H1 (cell line): ENCODE measurements at regions of chr17 and their contacts with region 1.

Region 1: GRCh38 chr17:50783193-50783660 is 15.9 kb upstream of the ANKRD40CL start:
- DNase-seq: peak; percentile 89 to 98
- H3K4me3 ChIP-seq: no peak overlapping the region
- H3K27ac ChIP-seq: no peak overlapping the region
- H3K4me1 ChIP-seq: peaks cover 0 to 3% (median 0%) of the 10 kb centered on the region in 4 experiments; a peak in 1 of 7 replicates
- H3K27me3 ChIP-seq: no peaks in the 10 kb centered on the region
- CTCF ChIP-seq: peak; percentile 99 to 100 (median 99)
- EP300 ChIP-seq: peak in 1 of 2 experiments; percentile 40; a peak in 1 of 3 replicates
- POLR2A ChIP-seq: no peak
- RAD21 ChIP-seq: peak; percentile 99 to 100

Region 2: DNA sequence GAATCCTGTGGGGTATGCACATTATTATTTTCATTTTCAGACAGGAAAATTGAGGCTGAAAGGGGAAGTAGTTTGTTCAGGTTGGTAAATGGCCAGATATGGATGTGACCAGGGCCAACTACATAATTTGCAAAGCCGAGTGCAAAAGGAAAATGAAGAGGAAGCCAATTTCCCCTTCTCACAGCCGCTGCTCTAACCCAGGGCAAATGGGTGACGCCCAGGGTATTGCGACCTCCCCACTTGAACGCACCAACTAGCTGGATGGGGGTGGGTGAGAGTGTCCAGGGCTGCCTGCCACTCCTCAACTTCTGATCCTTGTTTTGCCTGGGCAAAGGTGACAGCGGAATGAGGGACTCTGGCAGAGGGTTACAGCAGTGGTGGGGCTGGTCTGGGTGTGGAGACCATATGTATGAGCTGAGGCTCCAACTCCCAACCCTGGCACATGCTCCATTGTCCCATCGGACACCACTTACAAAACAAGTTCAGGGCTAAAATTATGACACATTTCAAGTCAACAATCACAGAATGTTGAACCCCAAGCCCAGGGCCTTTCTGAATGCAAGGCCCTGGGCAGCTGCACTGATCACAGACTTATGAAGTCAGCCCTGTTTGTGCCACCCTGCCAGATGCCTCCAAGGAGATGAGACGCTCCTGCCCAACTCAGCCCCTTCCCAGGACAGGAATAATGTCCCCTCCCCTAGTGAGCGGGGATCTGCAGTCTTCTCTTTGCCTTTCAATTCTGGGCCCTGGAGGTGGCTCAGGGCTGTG is 17.6 kb before region 1 on chr17:
- CTCF ChIA-PET with region 1: interaction called, 17 read pairs
- POLR2A ChIA-PET with region 1: no interaction called
- DNase-seq: no peak
- H3K4me3 ChIP-seq: no peak overlapping the region
- H3K27ac ChIP-seq: no peak overlapping the region
- H3K4me1 ChIP-seq: no peaks in the 10 kb centered on the region
- H3K27me3 ChIP-seq: no peaks in the 10 kb centered on the region
- CTCF ChIP-seq: no peak
- EP300 ChIP-seq: no peak
- POLR2A ChIP-seq: no peak
- RAD21 ChIP-seq: no peak

Region 3: GRCh38 chr17:50798424-50799288 is 15.4 kb after region 1 on chr17:
- CTCF ChIA-PET with region 1: interaction called, 130 read pairs
- POLR2A ChIA-PET with region 1: interaction called, 3 read pairs
- DNase-seq: no peak
- H3K4me3 ChIP-seq: no peak overlapping the region
- H3K27ac ChIP-seq: no peak overlapping the region
- H3K4me1 ChIP-seq: peaks cover 0 to 5% (median 2%) of the 10 kb centered on the region in 4 experiments; a peak in 4 of 7 replicates
- H3K27me3 ChIP-seq: no peaks in the 10 kb centered on the region
- CTCF ChIP-seq: no peak
- EP300 ChIP-seq: no peak
- POLR2A ChIP-seq: no peak
- RAD21 ChIP-seq: no peak

Region 4: DNA sequence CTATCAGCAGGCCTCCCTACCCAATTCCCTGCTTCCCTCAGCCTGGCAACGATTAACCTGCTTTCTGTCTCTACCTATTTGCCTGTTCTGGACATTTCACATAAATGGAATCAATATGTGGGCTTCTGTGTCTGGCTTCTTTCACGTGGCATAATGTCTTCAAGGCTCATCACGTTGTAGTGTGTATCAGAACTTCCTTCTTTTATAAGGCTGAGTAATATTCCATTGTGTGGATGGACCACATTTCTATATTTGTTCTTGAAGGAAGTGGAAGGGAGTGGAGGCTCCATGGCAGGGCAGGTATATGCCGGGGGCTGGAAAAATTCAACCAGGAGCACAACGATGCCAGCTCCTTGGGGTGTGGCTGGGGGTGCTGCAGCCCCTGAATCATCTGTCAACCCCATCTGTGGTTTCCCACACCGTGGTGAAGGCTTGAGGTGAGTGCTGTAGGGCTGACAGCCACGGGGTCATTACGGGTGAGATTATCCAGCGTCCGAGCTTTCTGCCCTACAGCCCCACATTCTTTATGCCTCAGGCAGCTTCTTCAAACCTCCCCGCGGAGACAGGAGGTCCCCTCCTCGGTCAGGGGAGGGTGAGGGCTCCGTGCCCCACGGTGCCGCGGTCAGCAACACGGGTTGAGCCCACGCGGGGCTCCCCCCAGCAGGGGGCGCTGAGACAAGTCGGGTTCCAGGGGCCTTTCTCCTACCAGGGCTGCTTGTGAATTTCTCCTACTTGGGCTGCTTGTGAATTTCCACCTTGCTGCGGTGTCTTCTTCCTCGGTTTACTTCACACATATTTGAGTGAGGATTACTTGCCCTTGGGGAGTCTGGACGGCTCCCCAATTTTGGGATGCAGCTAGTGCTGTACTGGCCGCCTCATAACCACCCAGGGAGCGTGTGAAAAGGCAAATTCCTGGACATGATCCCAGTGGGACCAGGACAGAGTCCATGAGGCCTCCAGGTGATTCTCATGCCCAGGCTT is 33.8 kb after region 1 on chr17:
- CTCF ChIA-PET with region 1: interaction called, 63 read pairs
- POLR2A ChIA-PET with region 1: no interaction called
- DNase-seq: peak in 1 of 2 experiments; percentile 82
- H3K4me3 ChIP-seq: no peak overlapping the region
- H3K27ac ChIP-seq: no peak overlapping the region
- H3K4me1 ChIP-seq: peaks cover 0 to 5% (median 0%) of the 10 kb centered on the region in 4 experiments; a peak in 2 of 7 replicates
- H3K27me3 ChIP-seq: no peaks in the 10 kb centered on the region; a peak in 1 of 7 replicates
- CTCF ChIP-seq: peak; percentile 67 to 76 (median 68)
- EP300 ChIP-seq: no peak
- POLR2A ChIP-seq: no peak
- RAD21 ChIP-seq: peak; percentile 43 to 62

Region 5: GRCh38 chr17:50834429-50835300 is 51.4 kb after region 1 on chr17:
- CTCF ChIA-PET with region 1: interaction called, 223 read pairs
- POLR2A ChIA-PET with region 1: interaction called, 4 read pairs
- DNase-seq: no peak
- H3K4me3 ChIP-seq: no peak overlapping the region
- H3K27ac ChIP-seq: no peak overlapping the region
- H3K4me1 ChIP-seq: peaks cover 0 to 31% (median 26%) of the 10 kb centered on the region in 4 experiments; a peak in 6 of 7 replicates
- H3K27me3 ChIP-seq: no peaks in the 10 kb centered on the region
- CTCF ChIP-seq: no peak
- EP300 ChIP-seq: no peak
- POLR2A ChIP-seq: no peak
- RAD21 ChIP-seq: no peak

Region 6: GRCh38 chr17:50848039-50848438 is 64.8 kb after region 1 on chr17:
- CTCF ChIA-PET with region 1: interaction called, 223 read pairs
- POLR2A ChIA-PET with region 1: interaction called, 4 read pairs
- DNase-seq: no peak
- H3K4me3 ChIP-seq: no peak overlapping the region
- H3K27ac ChIP-seq: no peak overlapping the region
- H3K4me1 ChIP-seq: peaks cover 2 to 4% (median 3%) of the 10 kb centered on the region in 4 experiments; a peak in 3 of 7 replicates
- H3K27me3 ChIP-seq: no peaks in the 10 kb centered on the region
- CTCF ChIP-seq: no peak
- EP300 ChIP-seq: no peak
- POLR2A ChIP-seq: no peak
- RAD21 ChIP-seq: 0 out of 4 replicates have a peak, but pooled peaks of 1 of the 2 experiments have one; percentile 5

Region 7: GRCh38 chr17:50931144-50931908 is 148.1 kb after region 1 on chr17:
- CTCF ChIA-PET with region 1: interaction called, 11 read pairs
- POLR2A ChIA-PET with region 1: interaction called, 3 read pairs
- DNase-seq: peak in 1 of 2 experiments; percentile 77
- H3K4me3 ChIP-seq: peak overlapping the region; percentile 36 to 70 (median 47)
- H3K27ac ChIP-seq: no peak overlapping the region
- H3K4me1 ChIP-seq: peaks cover 0 to 9% (median 6%) of the 10 kb centered on the region in 4 experiments
- H3K27me3 ChIP-seq: peaks cover 0 to 6% (median 5%) of the 10 kb centered on the region in 4 experiments; a peak in 4 of 7 replicates
- CTCF ChIP-seq: no peak
- EP300 ChIP-seq: no peak
- POLR2A ChIP-seq: peak in 1 of 2 experiments; percentile 16; a peak in 1 of 3 replicates
- RAD21 ChIP-seq: 0 out of 4 replicates have a peak, but pooled peaks of 1 of the 2 experiments have one; percentile 2